GM13976 (cell line): ENCODE measurements at regions of chr7 and their contacts with region 1.

Region 1: GRCh38 chr7:47435889-47436312 is 146.0 kb downstream of the TNS3 start:
- DNase-seq: no peak
- CTCF ChIP-seq: no peak

Region 2: GRCh38 chr7:47720141-47720906 is 284.4 kb after region 1 on chr7:
- in situ Hi-C with region 1: no loop called
- DNase-seq: no peak
- CTCF ChIP-seq: no peak

Region 3: DNA sequence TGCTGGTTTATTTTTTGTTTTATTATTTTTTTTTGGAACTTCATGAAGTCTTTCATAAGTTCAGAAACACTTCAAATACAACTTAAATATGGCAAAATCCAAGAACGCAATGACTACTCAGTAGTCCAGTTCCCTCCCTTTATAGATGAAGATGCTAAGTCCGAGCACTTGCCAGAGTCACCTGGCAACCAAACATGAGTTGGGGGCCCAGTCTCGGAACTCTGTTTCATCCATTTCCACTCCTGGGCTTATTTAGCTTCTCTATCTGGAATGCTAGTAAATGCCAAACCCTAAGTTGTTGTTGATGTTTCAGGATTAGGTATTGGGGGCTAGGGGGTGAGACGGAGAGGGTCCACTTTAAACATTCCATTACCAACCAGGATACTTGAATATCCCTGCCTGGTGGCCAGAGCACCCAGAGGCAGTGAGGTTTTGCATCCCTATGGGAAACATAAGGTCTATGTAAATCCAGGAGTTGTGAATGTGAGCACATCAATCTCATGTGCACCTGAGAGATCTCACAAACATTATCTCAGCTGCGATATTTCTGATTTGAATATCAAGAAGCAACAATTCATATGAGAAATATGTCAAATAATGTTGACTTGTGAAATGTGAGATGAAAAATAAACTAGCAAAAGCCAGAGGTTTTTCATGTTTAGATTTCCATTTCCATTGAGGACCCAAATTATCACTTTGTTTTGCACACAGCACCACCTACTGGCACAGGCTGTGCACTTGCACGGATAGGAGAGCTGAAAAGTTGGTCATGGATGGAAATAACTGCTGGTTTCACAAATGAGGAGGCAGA is 383.1 kb after region 1 on chr7:
- in situ Hi-C with region 1: loop called (anchors 25 kb)
- DNase-seq: peak; percentile 70
- CTCF ChIP-seq: peak; percentile 98